ENCODE measurements at regions of chr4 and their contacts with region 1.

Region 1: DNA sequence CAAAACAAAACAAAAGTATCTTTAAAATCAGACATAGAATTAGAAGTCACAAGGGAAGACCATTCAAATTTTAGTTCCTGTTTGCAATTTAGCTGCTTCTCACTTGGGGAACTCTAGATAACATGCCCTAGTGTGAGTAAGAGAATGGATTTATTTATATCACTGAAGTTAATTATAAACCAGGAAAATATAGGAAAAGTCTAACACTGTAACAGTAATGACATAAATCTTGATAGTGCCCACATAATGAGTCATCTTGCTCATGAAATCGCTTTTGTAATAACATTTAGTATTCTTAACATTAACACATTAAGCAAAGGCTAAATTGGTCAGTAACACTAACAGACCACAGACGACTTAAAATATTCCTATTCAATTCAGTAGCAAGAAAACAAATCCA is 710.7 kb downstream of the STPG2 start:
- DNase-seq: no peak
- ATAC-seq: no peak
- H3K4me3 ChIP-seq: no peak overlapping the region
- H3K27ac ChIP-seq: no peak overlapping the region
- H3K4me1 ChIP-seq: no peaks in the 10 kb centered on the region
- H3K27me3 ChIP-seq: no peaks in the 10 kb centered on the region
- CTCF ChIP-seq: no peak

Region 2: DNA sequence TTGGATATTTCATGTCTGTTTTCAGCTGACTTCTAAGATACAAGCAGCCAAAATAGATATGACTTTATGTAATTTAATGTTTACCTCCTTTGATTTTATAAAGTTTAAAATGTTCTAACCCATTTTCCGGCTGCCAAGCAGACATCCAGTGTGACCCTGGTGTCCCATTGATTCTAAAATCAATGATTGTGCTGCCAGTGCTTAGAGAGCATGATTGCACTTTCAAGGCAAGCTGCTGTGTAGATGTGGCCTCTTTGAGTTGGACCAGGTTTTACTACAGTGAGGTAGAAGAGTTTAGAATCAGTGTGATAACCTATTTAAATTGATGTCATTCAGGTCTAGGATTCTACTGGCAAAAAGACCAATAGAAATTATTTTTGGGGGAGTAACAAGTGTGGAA is 20.2 kb before region 1 on chr4:
- intact Hi-C with region 1: loop called in 1 of 10 experiments (anchors 2 kb)
- DNase-seq: no peak
- ATAC-seq: no peak
- H3K4me3 ChIP-seq: no peak overlapping the region
- H3K27ac ChIP-seq: no peak overlapping the region
- H3K4me1 ChIP-seq: no peaks in the 10 kb centered on the region
- H3K27me3 ChIP-seq: no peaks in the 10 kb centered on the region
- CTCF ChIP-seq: no peak

Region 3: DNA sequence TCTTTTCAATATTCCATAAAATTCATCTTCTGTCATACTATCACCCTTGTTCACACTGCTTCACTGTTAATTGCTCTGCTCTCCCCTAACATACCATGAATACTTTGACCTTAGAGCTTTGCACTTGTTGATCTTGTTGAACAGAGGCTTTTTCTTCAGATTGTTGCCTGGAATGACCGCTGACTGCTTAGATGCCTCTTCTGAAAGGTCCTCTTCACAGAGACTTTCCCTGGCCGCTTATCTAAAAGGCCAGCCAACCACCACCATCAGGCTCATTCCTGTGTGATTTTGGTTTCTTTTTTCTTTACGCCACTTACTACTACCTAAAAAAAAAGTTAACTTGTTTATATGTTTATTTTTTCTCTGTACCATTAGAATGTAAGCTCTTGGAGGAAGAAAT is 43.1 kb after region 1 on chr4:
- intact Hi-C with region 1: no loop called
- DNase-seq: no peak
- ATAC-seq: no peak
- H3K4me3 ChIP-seq: no peak overlapping the region
- H3K27ac ChIP-seq: no peak overlapping the region
- H3K4me1 ChIP-seq: no peaks in the 10 kb centered on the region
- H3K27me3 ChIP-seq: no peaks in the 10 kb centered on the region
- CTCF ChIP-seq: no peak

Measured in heart right ventricle (tissue), 16 donors.